ENCODE measurements at regions of chr7 and their contacts with region 1.

Region 1: DNA sequence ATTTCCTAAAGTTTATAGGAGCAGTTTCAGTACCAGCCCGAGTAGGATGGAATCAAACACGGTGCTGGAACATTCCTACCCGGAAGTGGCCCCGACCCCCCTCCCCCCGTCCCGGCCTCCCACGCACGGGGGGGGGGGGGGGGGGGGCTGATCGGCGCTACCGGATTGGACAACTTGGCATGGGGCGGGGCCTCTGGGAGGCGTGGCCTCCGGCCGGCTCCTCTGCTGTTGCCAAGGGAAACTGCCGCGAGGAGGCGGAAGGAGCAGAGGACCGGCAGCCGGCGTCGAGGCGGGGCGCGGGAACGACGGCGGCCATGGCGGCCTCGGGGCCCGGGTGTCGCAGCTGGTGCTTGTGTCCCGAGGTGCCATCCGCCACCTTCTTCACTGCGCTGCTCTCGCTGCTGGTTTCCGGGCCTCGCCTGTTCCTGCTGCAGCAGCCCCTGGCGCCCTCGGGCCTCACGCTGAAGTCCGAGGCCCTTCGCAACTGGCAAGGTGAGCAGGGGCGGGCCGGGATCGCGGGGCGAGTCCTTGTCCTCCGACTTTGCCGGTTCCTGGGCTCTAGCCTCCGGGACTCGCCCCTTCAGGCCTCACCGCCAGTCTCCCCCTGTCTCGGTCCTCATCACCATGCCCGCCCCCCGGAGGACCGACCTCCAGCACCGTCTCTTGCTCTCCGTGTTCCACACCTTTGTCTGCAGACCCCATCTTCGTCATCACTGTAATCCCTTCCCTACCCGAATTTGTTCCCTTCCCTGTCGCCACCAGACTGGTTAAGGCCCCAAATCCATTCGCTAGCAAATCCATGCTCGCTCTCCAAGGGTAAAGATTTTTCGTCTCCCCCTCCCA is at the start of gene RHBDD2:
- DNase-seq: peak; percentile 63
- ATAC-seq: peak; percentile 98
- H3K4me3 ChIP-seq: peak within 1 kb of the TSS; percentile 77 to 95
- H3K27ac ChIP-seq: peak within 1 kb of the TSS; percentile 99
- H3K4me1 ChIP-seq: peaks cover 12% of the 10 kb centered on the region; the same call in 1 of the 2 replicates
- H3K27me3 ChIP-seq: no peaks in the 10 kb centered on the region
- CTCF ChIP-seq: no peak
- total RNA-seq, gene RHBDD2: 79.3 TPM

Region 2: DNA sequence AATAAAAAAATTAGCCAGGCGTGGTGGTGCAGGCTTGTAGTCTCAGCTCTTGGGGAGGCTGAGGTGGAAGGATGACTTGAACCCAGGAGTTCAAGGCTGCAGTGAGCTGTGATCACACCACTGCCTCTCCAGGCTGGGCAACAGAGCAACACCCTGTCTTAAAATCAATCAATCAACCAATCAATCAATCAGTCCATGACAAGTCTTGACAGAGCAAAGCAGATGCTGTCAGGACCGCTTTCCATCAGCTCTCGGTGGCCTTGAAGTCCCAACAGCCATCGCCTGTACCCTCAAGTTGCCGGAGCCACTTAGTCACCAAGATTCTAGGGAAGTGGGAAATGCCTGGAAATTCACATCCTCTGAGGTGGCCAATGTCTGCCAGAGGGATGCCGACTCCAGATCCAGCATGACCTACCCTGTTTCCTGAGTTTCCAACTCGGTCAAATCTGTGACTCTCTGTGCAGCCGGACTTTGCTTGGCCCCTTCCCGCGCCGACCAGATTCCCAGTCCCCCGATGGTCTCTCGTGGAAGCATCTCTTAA is 64.5 kb before region 1 on chr7:
- CTCF ChIA-PET with region 1: no interaction called
- POLR2A ChIA-PET with region 1: no interaction called
- in situ Hi-C with region 1: no loop called
- intact Hi-C with region 1: no loop called
- DNase-seq: no peak
- ATAC-seq: peak; percentile 23; the same call in 1 of the 2 replicates
- H3K4me3 ChIP-seq: no peak overlapping the region
- H3K27ac ChIP-seq: no peak overlapping the region
- H3K4me1 ChIP-seq: no peaks in the 10 kb centered on the region
- H3K27me3 ChIP-seq: no peaks in the 10 kb centered on the region
- CTCF ChIP-seq: no peak

Region 3: DNA sequence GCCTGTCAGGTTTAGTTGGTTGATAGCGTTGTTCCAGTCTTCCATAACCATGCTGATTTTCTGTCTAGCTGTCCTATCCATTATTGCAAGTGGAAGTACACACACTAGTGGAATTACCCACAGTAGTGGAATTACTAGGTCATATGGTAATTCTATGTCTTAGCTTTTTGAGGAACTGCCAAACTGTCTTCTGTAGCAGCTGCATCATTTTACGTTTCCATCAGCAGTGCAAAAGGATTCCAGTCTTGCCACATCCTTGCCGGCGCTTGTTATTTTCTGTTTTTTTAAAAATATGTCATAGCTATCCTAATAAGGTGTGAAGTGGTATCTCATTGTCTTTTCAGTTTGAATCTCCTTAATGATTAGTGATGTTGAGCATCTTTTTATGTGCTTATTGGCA is 17.4 kb before region 1 on chr7:
- CTCF ChIA-PET with region 1: interaction called, 3 read pairs
- POLR2A ChIA-PET with region 1: interaction called, 11 read pairs
- in situ Hi-C with region 1: no loop called
- intact Hi-C with region 1: no loop called
- DNase-seq: no peak
- ATAC-seq: no peak
- H3K4me3 ChIP-seq: no peak overlapping the region
- H3K27ac ChIP-seq: no peak overlapping the region
- H3K4me1 ChIP-seq: 0 out of 2 replicates have a peak, but pooled peaks cover 3% of the 10 kb centered on the region
- H3K27me3 ChIP-seq: no peaks in the 10 kb centered on the region
- CTCF ChIP-seq: no peak

Region 4: DNA sequence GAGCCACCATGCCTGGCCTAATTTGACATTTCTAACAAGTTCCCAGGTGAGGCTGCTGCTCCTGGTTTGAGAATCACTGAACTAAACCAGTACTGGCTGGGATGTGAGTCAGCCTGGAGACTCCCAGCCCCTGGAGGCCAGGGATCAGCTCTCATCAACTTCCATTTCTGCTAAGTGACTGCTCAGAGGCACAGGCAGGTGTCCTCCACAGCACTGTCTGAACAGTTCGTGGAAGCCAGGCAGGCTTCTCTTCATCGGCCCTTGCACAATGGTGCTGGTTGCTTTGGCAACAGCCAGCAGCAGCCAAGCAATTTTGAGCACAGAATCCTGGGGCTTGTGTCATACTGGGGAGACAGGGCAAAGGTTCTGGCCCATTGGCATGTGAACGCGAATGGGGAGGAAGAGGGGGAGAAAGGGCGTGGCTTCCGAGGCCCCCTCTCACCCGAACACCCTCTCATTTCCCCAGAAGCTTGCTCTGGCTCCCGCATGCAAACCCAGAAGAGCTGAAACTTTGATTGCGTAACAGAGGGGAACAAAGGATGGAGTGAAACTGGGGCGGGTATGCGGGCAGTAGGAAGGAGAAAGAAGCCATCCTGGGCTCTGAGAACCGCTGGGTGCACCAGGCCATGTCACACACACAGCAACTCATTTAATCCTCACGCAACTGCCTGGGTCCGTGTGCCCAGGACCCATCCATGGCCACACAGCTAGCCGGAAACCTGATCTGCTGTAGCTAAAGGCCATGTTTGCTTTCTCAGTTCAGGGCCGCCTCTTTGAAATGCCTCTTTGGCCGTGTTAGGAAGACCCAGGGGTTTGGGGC is 27.0 kb after region 1 on chr7:
- CTCF ChIA-PET with region 1: no interaction called
- POLR2A ChIA-PET with region 1: interaction called, 17 read pairs
- in situ Hi-C with region 1: no loop called
- intact Hi-C with region 1: no loop called
- DNase-seq: no peak
- ATAC-seq: peak; percentile 57; the same call in 1 of the 2 replicates
- H3K4me3 ChIP-seq: no peak overlapping the region
- H3K27ac ChIP-seq: no peak overlapping the region
- H3K4me1 ChIP-seq: no peaks in the 10 kb centered on the region
- H3K27me3 ChIP-seq: no peaks in the 10 kb centered on the region
- CTCF ChIP-seq: no peak

Region 5: DNA sequence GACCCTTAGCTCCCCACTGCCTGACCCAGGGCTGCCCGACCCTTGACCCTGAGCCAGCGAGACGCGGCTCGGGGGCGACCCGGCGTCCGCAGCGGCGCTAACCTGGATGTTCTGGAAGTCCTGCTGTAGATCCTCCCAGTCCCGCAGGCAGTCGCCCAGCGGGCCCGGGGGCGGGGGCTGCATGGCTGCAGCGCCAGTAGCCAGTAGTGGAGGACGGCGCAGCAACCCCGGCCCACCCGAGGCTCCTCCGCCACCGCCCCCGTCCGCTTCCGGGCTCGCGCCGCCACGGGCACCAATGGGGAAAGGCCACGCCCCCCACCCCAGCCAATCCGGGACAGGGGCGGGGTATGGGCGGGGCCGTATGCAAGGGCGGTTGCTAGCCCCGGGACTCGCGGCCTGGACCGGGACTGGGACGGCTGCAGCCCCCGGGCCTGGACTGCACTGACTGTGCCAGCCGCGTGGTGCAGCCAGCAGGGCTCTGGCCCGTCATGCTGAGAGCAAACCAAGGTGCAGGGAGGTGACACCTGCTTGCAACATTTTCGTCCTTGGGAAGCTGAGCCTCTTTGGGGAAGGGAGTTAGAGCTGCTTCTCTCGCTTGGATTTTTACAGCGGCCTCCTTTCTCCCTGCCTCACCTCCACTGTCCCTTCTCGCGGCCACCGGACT is 115.5 kb after region 1 on chr7 and contains the start of gene TMEM120A:
- CTCF ChIA-PET with region 1: no interaction called
- POLR2A ChIA-PET with region 1: interaction called, 7 read pairs
- in situ Hi-C with region 1: no loop called
- intact Hi-C with region 1: loop called (anchors 10 kb)
- DNase-seq: peak; percentile 30
- ATAC-seq: peak; percentile 95
- H3K4me3 ChIP-seq: peak within 1 kb of the TSS; percentile 77 to 88
- H3K27ac ChIP-seq: peak within 1 kb of the TSS; percentile 87
- H3K4me1 ChIP-seq: peaks cover 22% of the 10 kb centered on the region
- H3K27me3 ChIP-seq: no peaks in the 10 kb centered on the region
- CTCF ChIP-seq: no peak
- total RNA-seq, gene TMEM120A: 71.0 TPM

Measured in Panc1 (cell line).